H1 (cell line): ENCODE measurements at regions of chr19 and their contacts with region 1.

Region 1: GRCh38 chr19:531009-531752 is 379 bp upstream of the CDC34 start:
- DNase-seq: peak in 1 of 2 experiments; percentile 94
- H3K4me3 ChIP-seq: peak overlapping the region; percentile 63 to 96 (median 82)
- H3K27ac ChIP-seq: peak overlapping the region; percentile 77; the same call in 1 of the 2 replicates
- H3K4me1 ChIP-seq: peaks cover 0 to 10% (median 8%) of the 10 kb centered on the region in 4 experiments; a peak in 6 of 7 replicates
- H3K27me3 ChIP-seq: no peaks in the 10 kb centered on the region
- CTCF ChIP-seq: no peak
- EP300 ChIP-seq: no peak
- POLR2A ChIP-seq: no peak
- RAD21 ChIP-seq: no peak

Region 2: DNA sequence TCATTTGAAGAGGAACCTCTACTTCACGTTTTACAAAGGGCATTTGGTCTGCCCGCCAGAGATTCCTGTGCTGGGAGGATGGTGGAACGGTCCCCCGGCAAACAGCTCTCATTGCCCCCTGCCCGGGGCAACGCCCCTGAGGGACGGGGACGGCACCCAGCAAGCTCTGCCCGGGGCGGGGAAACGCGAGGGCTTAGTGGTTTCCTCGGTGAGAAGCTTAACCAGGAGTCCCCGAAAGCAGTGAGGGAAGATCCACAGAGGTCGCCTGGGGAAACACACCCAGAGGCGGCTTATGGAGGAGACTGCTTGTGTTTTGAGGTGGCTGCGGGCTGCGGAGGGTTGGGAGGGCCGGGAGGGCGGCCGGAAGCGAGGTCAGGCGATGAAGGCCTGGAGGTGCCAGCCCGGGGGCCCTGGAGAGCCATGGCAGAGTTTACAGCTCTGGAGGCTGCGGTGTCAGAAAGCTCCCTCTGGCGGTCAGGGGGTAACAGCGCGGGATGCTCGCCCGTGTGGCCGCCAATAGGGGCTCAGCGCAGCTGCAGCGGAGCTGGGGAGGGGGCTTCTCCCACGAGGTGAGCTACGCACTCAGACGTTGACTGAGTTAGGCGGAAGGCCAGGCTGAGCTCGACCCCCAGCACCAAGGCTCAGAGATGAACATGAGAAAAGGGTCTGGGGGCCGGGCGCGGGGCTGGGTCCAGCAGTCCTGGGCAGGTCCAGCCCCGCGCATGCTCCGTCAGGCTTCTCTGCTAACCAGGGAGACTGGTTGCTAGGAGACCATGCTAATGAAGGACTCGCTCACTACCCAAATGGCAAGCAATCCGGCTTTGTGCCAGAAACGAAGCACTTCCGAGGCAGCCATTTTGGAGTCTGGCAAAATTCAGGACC is 24.5 kb before region 1 on chr19:
- CTCF ChIA-PET with region 1: interaction called, 26 read pairs
- POLR2A ChIA-PET with region 1: interaction called, 13 read pairs
- DNase-seq: peak; percentile 92 to 94
- H3K4me3 ChIP-seq: peak overlapping the region; percentile 79 to 86 (median 80)
- H3K27ac ChIP-seq: peak overlapping the region; percentile 97
- H3K4me1 ChIP-seq: peaks cover 0 to 12% (median 8%) of the 10 kb centered on the region in 4 experiments; a peak in 5 of 7 replicates
- H3K27me3 ChIP-seq: no peaks in the 10 kb centered on the region; a peak in 2 of 7 replicates
- CTCF ChIP-seq: peak; percentile 93 to 99 (median 97)
- EP300 ChIP-seq: peak in 1 of 2 experiments; percentile 49; a peak in 1 of 3 replicates
- POLR2A ChIP-seq: 0 out of 3 replicates have a peak, but pooled peaks of 1 of the 2 experiments have one; percentile 47
- RAD21 ChIP-seq: peak; percentile 57 to 66

Region 3: GRCh38 chr19:518603-519231 is 12.5 kb before region 1 on chr19:
- CTCF ChIA-PET with region 1: interaction called, 8 read pairs
- POLR2A ChIA-PET with region 1: interaction called, 36 read pairs
- DNase-seq: peak in 1 of 2 experiments; percentile 75
- H3K4me3 ChIP-seq: peak overlapping the region in 1 of 4 experiments; percentile 34; a peak in 1 of 8 replicates
- H3K27ac ChIP-seq: no peak overlapping the region
- H3K4me1 ChIP-seq: no peaks in the 10 kb centered on the region
- H3K27me3 ChIP-seq: 0 out of 7 replicates have a peak, but pooled peaks cover 0 to 5% (median 0%) of the 10 kb centered on the region in 4 experiments
- CTCF ChIP-seq: peak; percentile 12 to 47 (median 30); a peak in 3 of 4 replicates
- EP300 ChIP-seq: no peak
- POLR2A ChIP-seq: no peak
- RAD21 ChIP-seq: peak in 1 of 2 experiments; percentile 7; a peak in 1 of 4 replicates

Region 4: GRCh38 chr19:543910-544608 is 12.9 kb after region 1 on chr19 and contains the start of gene GZMM:
- CTCF ChIA-PET with region 1: interaction called, 4 read pairs
- POLR2A ChIA-PET with region 1: interaction called, 43 read pairs
- DNase-seq: no peak
- H3K4me3 ChIP-seq: no peak within 1 kb of the TSS
- H3K27ac ChIP-seq: no peak within 1 kb of the TSS
- H3K4me1 ChIP-seq: no peaks in the 10 kb centered on the region; a peak in 1 of 7 replicates
- H3K27me3 ChIP-seq: no peaks in the 10 kb centered on the region
- CTCF ChIP-seq: no peak
- EP300 ChIP-seq: no peak
- POLR2A ChIP-seq: 0 out of 3 replicates have a peak, but pooled peaks of 1 of the 2 experiments have one; percentile 15
- RAD21 ChIP-seq: no peak
- total RNA-seq, gene GZMM: 0.32 and 0.59 TPM in 2 replicates

Region 5: DNA sequence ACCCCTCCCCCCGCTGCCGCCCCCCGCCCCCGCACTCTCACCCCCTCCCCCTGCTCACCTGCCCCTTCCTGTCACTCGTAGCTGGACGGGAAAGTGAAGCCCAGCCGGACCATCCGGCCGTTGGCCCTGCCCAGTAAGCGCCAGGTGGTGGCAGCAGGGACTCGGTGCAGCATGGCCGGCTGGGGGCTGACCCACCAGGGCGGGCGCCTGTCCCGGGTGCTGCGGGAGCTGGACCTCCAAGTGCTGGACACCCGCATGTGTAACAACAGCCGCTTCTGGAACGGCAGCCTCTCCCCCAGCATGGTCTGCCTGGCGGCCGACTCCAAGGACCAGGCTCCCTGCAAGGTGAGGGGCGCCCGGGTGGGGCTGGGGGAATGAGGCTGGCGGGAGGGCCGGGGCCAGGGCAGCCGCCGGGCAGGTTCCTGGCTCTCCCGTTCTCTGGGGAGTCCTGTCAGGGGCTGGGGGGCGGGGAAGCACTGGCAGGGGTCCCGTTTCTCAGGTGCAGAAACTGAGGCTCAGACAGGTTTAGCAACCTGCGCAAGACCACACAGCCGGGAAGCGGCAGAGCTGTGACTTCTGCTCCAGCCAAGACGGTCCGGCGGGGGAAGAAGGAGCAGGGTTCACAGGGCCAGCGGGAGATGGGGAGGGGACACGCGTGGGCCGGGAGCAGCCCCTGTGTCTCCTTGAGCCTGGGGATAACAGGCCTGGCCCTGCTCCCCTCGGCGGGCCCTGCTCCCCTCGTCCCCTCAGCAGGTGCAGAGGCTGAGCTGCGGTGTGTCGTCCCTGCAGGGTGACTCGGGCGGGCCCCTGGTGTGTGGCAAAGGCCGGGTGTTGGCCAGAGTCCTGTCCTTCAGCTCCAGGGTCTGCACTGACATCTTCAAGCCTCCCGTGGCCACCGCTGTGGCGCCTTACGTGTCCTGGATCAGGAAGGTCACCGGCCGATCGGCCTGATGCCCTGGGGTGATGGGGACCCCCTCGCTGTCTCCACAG is 18.0 kb after region 1 on chr19:
- CTCF ChIA-PET with region 1: no interaction called
- POLR2A ChIA-PET with region 1: interaction called, 43 read pairs
- DNase-seq: no peak
- H3K4me3 ChIP-seq: no peak overlapping the region
- H3K27ac ChIP-seq: no peak overlapping the region
- H3K4me1 ChIP-seq: peaks cover 0 to 3% (median under 1%) of the 10 kb centered on the region in 4 experiments; a peak in 3 of 7 replicates
- H3K27me3 ChIP-seq: no peaks in the 10 kb centered on the region
- CTCF ChIP-seq: no peak
- EP300 ChIP-seq: no peak
- POLR2A ChIP-seq: no peak
- RAD21 ChIP-seq: no peak

Region 6: DNA sequence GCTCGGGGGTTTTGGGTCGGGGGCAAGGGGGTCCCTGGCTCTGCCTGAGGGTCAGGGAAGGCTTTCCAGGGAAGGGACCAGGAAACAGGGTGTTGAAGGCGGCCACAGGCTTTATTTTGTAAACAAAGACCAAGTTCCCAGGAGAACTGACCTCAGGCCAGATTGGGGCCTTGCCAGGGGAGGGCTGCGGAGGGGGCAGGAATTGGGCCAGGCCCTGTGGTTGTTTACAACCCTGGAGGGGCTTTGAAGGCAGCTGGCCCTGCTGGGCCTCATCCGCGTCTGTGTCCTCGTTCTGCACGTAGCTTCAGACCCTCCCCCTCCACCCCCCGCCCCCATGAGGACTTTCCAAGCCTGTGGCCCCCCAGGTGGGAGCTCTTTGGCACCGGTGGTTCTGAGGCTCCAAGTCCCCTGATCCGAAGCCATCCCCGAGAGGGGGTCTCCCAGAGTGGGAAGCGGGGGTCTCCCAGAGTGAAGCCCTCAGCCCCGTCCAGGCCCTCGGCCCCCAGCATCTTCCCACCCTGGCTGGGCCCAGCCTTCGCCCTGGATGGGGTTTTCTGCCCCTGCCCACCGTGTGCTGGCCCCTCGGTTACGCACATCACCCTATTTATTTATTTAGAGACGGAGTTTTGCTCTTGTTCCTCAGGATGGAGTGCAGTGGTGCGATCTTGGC is 27.7 kb after region 1 on chr19:
- CTCF ChIA-PET with region 1: interaction called, 4 read pairs
- POLR2A ChIA-PET with region 1: interaction called, 15 read pairs
- DNase-seq: no peak
- H3K4me3 ChIP-seq: no peak overlapping the region
- H3K27ac ChIP-seq: no peak overlapping the region
- H3K4me1 ChIP-seq: peaks cover 0 to 2% (median under 1%) of the 10 kb centered on the region in 4 experiments; a peak in 4 of 7 replicates
- H3K27me3 ChIP-seq: no peaks in the 10 kb centered on the region
- CTCF ChIP-seq: no peak
- EP300 ChIP-seq: no peak
- POLR2A ChIP-seq: no peak
- RAD21 ChIP-seq: no peak

Region 7: DNA sequence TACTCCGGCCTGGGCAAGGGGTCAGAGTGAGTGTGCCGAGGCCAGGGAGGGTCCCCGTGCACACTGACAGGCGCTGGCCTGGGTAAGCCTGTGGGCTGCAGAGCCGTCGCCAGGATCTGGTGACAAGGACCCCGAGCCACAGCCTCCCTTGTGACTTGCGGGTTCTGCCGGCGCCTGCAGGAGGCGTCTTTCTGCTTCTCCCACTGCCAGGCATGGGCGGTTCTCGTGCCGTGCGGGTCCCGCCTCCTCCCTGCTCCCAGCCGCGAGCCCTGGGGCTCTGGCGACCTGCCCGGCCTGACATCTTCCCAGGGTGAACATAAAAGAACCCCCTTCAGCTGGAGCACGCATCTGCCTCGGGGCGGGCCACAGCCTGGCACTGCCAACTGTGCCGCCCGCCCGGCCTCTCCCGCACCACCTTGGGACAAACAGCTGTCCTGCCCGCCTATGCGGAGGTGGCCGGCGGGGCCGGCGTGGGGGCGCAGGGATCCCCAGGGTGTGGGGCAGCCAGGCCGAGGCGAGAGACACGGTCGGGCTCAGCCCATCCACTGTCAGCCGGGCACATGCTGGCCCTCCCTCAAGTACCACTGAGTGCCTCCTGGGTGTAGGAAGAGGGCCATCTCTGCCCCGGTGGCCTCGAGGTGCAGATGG is 57.0 kb after region 1 on chr19:
- CTCF ChIA-PET with region 1: interaction called, 6 read pairs
- POLR2A ChIA-PET with region 1: interaction called, 14 read pairs
- DNase-seq: peak; percentile 61 to 90
- H3K4me3 ChIP-seq: peak overlapping the region in 1 of 4 experiments; percentile 29; a peak in 1 of 8 replicates
- H3K27ac ChIP-seq: no peak overlapping the region
- H3K4me1 ChIP-seq: peaks cover 0 to 10% (median 3%) of the 10 kb centered on the region in 4 experiments; a peak in 5 of 7 replicates
- H3K27me3 ChIP-seq: peaks cover 23 to 39% (median 31%) of the 10 kb centered on the region in 4 experiments
- CTCF ChIP-seq: peak; percentile 75 to 88 (median 75)
- EP300 ChIP-seq: no peak
- POLR2A ChIP-seq: no peak
- RAD21 ChIP-seq: peak; percentile 32 to 61

Region 8: DNA sequence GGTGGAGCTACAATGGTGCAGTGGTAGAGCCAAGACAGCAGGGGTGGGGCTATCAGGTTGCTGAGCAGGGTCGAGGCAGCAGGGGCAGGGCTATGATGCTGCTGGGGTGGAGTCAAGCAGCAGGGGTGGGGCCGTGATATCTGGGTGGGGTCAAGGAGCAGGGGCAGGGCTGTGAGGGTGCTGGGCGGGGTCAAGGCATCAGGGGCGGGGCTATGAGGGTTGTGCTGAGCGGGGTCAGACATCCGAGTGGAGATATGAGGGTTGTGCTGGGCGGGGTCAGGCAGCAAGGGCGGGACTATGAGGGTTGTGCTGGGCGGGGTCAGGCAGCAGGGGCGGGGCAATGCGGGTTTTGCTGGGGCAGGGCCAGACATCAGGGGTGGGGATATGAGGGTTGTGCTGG is 73.2 kb after region 1 on chr19:
- CTCF ChIA-PET with region 1: no interaction called
- POLR2A ChIA-PET with region 1: no interaction called
- DNase-seq: no peak
- H3K4me3 ChIP-seq: no peak overlapping the region
- H3K27ac ChIP-seq: no peak overlapping the region
- H3K4me1 ChIP-seq: no peaks in the 10 kb centered on the region
- H3K27me3 ChIP-seq: no peaks in the 10 kb centered on the region
- CTCF ChIP-seq: no peak
- EP300 ChIP-seq: no peak
- POLR2A ChIP-seq: no peak
- RAD21 ChIP-seq: no peak

Region 9: DNA sequence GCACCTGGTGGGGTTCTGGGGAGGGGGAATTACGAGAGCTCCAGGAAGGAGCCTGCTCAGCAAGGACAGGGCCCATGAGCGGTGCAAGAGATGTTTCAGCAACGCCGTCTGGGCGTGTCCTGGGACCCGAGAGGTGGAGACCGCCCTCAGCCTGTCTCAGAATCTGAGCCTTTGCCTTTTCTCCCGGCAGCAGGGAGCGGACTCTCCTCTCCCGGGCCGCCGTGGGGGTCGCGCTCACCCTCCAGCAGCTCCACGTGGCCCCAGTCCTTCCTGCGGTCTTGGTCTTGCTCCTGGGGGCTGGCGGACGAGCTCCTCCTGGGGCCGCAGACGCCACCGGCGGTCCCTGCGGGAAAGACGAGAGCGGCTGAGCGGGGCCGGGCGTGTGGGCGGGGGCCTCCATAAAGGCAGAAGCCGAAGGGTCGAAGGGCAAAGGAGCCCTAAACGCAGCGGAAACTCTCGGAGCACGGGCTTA is 101.5 kb after region 1 on chr19:
- CTCF ChIA-PET with region 1: no interaction called
- POLR2A ChIA-PET with region 1: no interaction called
- DNase-seq: peak in 1 of 2 experiments; percentile 73
- H3K4me3 ChIP-seq: peak overlapping the region; percentile 88 to 99 (median 97)
- H3K27ac ChIP-seq: peak overlapping the region; percentile 62; the same call in 1 of the 2 replicates
- H3K4me1 ChIP-seq: peaks cover 0 to 8% (median 3%) of the 10 kb centered on the region in 4 experiments; a peak in 4 of 7 replicates
- H3K27me3 ChIP-seq: peaks cover 0 to 8% (median 1%) of the 10 kb centered on the region in 4 experiments; a peak in 2 of 7 replicates
- CTCF ChIP-seq: no peak
- EP300 ChIP-seq: no peak
- POLR2A ChIP-seq: no peak
- RAD21 ChIP-seq: no peak